Ascending aorta (tissue), 2 donors: ENCODE measurements at regions of chr17 and their contacts with region 1.

Region 1: GRCh38 chr17:73311781-73312641 is at the start of gene CDC42EP4:
- DNase-seq: peak; percentile 83 to 98
- H3K4me3 ChIP-seq: peak within 1 kb of the TSS; percentile 94 to 100
- H3K27ac ChIP-seq: peak within 1 kb of the TSS; percentile 99
- H3K4me1 ChIP-seq: peaks cover 16 to 35% of the 10 kb centered on the region in 2 donors
- H3K27me3 ChIP-seq: no peaks in the 10 kb centered on the region
- CTCF ChIP-seq: no peak
- total RNA-seq, gene CDC42EP4: 104 TPM

Region 2: DNA sequence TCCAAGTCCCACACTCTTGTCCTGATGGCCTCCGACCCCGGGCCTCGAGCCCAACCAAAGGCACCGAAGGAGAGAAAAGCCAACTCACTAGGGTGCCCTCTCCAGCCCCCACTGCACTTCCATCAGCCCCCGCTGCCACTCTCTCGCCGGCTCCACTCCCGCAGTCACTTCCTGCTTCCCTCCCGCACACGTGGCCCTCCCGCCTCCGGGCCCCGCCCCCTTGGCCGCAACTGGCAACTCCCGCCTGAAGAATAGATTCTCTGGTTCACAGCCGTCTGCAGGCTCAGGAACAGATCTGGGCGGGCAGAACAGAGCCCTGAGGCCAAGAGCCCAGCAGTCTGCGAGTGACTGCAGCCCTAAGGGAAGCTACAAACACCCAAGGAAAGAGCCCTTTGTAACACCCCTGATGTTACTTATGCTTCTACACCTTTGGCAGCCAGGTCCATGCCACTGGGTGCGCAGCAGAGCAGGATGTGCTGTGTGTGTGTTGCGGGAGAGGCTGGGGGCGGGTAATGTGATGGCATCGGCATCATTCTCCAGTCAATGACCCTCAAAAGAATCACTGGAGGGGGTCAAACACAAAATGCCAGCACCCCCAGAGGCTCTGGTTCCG is 219.4 kb before region 1 on chr17 and contains the start of gene SLC39A11:
- intact Hi-C with region 1: loop called (anchors 10 kb)
- DNase-seq: peak; percentile 80 to 95
- H3K4me3 ChIP-seq: peak within 1 kb of the TSS; percentile 77 to 86
- H3K27ac ChIP-seq: peak within 1 kb of the TSS; percentile 66 to 74
- H3K4me1 ChIP-seq: peaks cover 3 to 24% of the 10 kb centered on the region in 2 donors
- H3K27me3 ChIP-seq: no peaks in the 10 kb centered on the region
- CTCF ChIP-seq: no peak
- total RNA-seq, gene SLC39A11: 4.9 TPM

Region 3: GRCh38 chr17:73231841-73232586 is 80.0 kb before region 1 on chr17:
- intact Hi-C with region 1: loop called (anchors 1 kb)
- DNase-seq: peak; percentile 83 to 97
- H3K4me3 ChIP-seq: peak overlapping the region; percentile 87 to 96
- H3K27ac ChIP-seq: peak overlapping the region; percentile 83 to 85
- H3K4me1 ChIP-seq: peaks cover 5 to 27% of the 10 kb centered on the region in 2 donors
- H3K27me3 ChIP-seq: no peaks in the 10 kb centered on the region
- CTCF ChIP-seq: peak; percentile 27 to 39 (median 31)

Region 4: DNA sequence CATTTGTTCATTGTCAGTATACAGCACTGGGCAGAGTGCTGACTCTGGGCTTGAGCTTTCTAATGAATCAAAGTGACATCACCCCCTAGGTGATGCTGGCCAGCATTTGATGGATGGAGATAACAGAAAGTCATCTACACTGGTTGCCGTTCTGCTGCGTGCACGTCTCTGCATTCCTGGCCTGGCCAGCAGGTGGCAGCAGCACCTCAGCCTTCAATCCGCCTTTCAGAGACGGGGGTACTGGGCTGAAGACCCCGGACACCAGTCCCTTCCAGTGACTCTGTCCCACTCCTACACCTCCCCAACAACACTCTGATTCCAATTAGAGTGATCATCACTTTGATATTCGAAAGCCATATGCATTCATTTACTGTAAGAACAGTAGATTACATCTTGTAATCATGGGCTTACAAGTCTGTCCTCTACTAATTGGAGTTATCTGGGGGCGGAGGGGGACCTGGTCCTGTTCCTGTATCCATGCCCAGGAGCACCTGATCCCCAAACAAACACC is 56.3 kb before region 1 on chr17:
- intact Hi-C with region 1: loop called (anchors 5 kb)
- DNase-seq: no peak
- H3K4me3 ChIP-seq: no peak overlapping the region
- H3K27ac ChIP-seq: no peak overlapping the region
- H3K4me1 ChIP-seq: no peaks in the 10 kb centered on the region
- H3K27me3 ChIP-seq: no peaks in the 10 kb centered on the region
- CTCF ChIP-seq: peak; percentile 93 to 98 (median 95)

Region 5: DNA sequence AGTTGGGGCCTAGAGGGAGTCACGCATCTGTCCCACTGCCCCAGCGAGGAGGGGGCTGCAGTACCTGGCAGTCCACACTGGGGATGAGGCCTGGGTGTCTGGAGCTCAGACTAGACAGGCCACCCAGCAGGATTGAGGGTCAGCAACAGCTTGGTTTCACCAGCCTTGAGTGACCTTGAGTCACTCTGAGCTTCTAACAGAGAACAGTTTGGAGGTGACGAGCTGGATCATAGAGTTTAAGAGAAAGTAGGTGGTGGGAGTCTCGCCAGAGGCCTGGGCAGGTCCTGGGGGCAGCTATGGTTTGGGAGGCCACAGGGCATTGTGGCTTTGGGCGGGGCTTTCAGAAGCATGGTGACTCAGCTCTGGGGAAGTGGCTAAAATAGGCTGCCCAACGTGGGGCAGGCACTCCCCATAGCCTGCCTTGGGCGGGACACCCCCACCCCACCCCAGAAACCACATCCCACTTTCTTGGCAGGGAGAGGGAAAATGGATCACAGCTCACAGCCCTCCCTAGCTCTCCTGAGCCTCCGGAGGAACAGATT is 20.7 kb before region 1 on chr17:
- intact Hi-C with region 1: loop called (anchors 1 kb)
- DNase-seq: peak; percentile 50 to 93
- H3K4me3 ChIP-seq: peak overlapping the region; percentile 36 to 42
- H3K27ac ChIP-seq: peak overlapping the region; percentile 96 to 99
- H3K4me1 ChIP-seq: peaks cover 34 to 82% of the 10 kb centered on the region in 2 donors
- H3K27me3 ChIP-seq: no peaks in the 10 kb centered on the region
- CTCF ChIP-seq: no peak

Region 6: DNA sequence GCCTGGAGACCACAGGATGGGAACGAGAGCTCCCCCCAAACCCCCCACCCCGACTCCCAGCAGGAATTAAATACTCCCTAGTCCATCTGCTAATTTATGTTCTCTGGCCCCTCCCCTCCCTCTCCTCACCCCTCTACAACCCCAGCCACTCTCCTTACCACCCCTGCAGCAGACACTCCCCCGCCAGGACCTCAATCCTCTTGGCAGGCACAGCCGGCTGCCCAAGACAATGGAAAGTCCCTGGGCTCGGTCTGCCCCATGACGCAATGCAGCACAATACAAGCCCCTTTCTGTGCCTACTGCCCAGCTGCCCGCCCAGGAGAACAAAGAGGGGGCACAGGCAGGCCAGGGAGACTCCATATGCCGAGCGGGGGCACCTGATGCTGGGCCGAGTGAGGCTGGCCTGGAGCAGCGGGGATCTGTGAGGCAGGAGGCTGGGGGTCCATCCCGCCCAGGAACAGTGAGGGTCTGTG is 30.1 kb after region 1 on chr17:
- intact Hi-C with region 1: loop called (anchors 1 kb)
- DNase-seq: peak; percentile 55 to 80
- H3K4me3 ChIP-seq: no peak overlapping the region
- H3K27ac ChIP-seq: peak overlapping the region; percentile 78 to 83
- H3K4me1 ChIP-seq: peaks cover 3 to 37% of the 10 kb centered on the region in 2 donors
- H3K27me3 ChIP-seq: no peaks in the 10 kb centered on the region
- CTCF ChIP-seq: no peak

Region 7: DNA sequence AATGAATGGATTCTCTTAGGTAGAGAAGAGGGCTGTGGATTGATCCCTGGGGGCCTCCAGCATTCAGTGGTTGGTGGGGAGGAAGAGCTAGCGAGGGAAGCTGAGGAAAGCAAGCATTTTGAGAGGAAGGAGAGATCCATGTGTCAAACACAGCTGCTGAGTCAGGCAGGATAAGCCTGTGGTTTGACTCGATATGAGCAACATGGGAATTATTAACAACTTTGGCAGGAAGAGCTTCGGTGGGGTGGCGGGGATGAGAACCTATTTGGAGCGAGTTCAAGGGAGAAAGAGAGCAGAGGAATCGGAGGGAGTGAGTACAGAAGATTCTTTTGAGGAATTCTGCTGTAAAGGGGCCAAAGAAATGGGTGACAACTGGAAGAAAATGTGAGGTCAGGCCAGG is 59.3 kb after region 1 on chr17:
- intact Hi-C with region 1: loop called (anchors 1 kb)
- DNase-seq: no peak
- H3K4me3 ChIP-seq: no peak overlapping the region
- H3K27ac ChIP-seq: no peak overlapping the region
- H3K4me1 ChIP-seq: no peaks in the 10 kb centered on the region
- H3K27me3 ChIP-seq: no peaks in the 10 kb centered on the region
- CTCF ChIP-seq: no peak

Region 8: DNA sequence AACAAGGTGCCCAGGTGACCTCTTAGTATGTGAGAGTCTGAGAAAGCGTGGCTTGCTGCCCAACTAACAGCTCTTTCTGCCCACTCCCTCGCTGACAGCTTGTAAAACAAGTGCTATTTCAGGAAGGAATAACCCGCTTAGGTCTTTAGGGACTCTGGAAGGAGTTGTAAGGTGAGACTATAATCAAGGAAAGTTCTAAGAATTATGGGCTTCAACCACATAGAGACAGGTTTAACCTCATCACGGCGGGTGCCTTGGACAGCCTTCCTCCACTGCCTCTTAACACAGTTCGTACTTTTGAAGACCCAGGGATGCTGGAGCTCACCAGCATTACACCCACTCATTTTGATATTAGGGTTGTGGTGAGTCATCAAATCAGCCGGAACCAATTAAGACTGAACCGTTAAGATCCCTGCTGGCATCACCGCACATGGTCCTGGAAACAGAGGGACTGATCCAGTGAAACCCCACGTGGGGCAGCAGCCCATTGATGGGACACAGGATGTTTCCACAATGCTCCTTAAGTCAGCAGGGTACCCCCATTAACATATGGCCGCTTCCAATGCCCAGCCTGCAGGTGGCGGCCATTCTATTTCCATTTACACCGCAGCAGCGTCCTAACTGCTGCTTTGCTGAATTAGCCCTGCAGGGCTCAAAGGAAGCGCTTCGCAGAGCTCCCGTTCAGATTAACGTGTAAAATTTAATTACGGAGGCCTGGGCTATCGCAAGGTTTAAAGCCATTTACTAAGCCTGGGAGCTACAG is 508.9 kb after region 1 on chr17:
- intact Hi-C with region 1: no loop called
- DNase-seq: no peak
- H3K4me3 ChIP-seq: no peak overlapping the region
- H3K27ac ChIP-seq: no peak overlapping the region
- H3K4me1 ChIP-seq: no peaks in the 10 kb centered on the region
- H3K27me3 ChIP-seq: no peaks in the 10 kb centered on the region
- CTCF ChIP-seq: no peak